Activated CD4-positive, alpha-beta T cell treated with anti-CD3 and anti-CD28 coated beads for 36 hours (primary cell): ENCODE measurements at regions of chr9 and their contacts with region 1.

Region 1: GRCh38 chr9:130866474-130866965 is 30.1 kb downstream of the QRFP start:
- DNase-seq: peak; percentile 75
- ATAC-seq: peak; percentile 81
- H3K4me3 Mint-ChIP-seq: no peak overlapping the region
- H3K27ac Mint-ChIP-seq: no peak overlapping the region
- H3K4me1 Mint-ChIP-seq: peaks cover 2% of the 10 kb centered on the region
- H3K27me3 Mint-ChIP-seq: no peaks in the 10 kb centered on the region

Region 2: GRCh38 chr9:130707225-130707976 is 159.1 kb before region 1 on chr9:
- CTCF ChIA-PET with region 1: interaction called, 60 read pairs
- POLR2A ChIA-PET with region 1: no interaction called
- intact Hi-C with region 1: loop called (anchors 1 kb)
- DNase-seq: peak; percentile 82
- ATAC-seq: peak; percentile 33
- H3K4me3 Mint-ChIP-seq: no peak overlapping the region
- H3K27ac Mint-ChIP-seq: no peak overlapping the region
- H3K4me1 Mint-ChIP-seq: peaks cover 5% of the 10 kb centered on the region
- H3K27me3 Mint-ChIP-seq: no peaks in the 10 kb centered on the region

Region 3: DNA sequence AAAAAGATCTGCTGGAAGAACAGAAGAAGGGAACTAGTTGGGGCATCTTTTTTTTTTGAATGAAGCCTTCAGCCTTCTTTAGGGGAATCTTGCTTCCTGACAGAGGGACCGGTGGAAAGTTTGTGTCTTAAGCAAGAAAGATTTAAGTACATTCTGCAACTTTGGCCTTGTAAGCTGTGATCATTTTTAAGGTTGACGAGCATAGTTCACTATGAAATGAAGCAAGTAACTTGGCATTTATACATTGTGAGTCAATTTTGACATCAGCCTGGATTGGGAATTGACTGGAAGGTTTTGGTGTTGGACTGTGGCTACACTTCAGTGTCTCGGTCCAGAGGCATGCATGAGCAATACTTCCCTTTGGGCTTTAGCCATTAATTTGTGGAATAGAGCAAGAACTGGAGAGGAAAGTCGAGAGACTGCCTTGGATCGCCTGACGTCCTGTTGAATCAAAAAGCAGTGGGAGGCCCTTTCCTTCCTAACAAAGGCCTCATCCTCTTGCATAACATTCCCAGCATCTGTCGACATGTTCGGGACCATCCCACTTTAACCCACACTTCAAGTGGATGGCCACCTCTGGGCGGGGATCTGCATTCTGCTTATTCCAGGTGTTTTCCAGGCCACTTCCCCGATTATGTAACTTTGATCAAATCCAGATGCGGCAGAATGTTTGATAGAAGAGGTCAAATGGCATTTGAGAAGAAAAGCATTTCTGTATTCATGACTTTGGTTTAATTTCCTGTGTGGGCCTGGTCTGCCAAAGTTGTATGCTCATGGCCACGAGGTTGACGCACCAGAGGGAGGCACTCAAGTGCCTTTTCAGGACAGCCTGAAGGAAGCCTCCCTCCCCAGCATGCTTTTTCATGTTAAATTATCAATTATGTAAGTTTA is 18.9 kb before region 1 on chr9:
- CTCF ChIA-PET with region 1: interaction called, 10 read pairs
- POLR2A ChIA-PET with region 1: no interaction called
- intact Hi-C with region 1: no loop called
- DNase-seq: no peak
- ATAC-seq: no peak
- H3K4me3 Mint-ChIP-seq: no peak overlapping the region
- H3K27ac Mint-ChIP-seq: no peak overlapping the region
- H3K4me1 Mint-ChIP-seq: peaks cover 11% of the 10 kb centered on the region
- H3K27me3 Mint-ChIP-seq: no peaks in the 10 kb centered on the region

Region 4: GRCh38 chr9:130940693-130941576 is 74.4 kb after region 1 on chr9:
- CTCF ChIA-PET with region 1: interaction called, 5 read pairs
- POLR2A ChIA-PET with region 1: no interaction called
- intact Hi-C with region 1: loop called (anchors 1 to 2 kb)
- DNase-seq: peak; percentile 88
- ATAC-seq: peak; percentile 86
- H3K4me3 Mint-ChIP-seq: no peak overlapping the region
- H3K27ac Mint-ChIP-seq: no peak overlapping the region
- H3K4me1 Mint-ChIP-seq: peaks cover 9% of the 10 kb centered on the region
- H3K27me3 Mint-ChIP-seq: peaks cover 38% of the 10 kb centered on the region

Region 5: DNA sequence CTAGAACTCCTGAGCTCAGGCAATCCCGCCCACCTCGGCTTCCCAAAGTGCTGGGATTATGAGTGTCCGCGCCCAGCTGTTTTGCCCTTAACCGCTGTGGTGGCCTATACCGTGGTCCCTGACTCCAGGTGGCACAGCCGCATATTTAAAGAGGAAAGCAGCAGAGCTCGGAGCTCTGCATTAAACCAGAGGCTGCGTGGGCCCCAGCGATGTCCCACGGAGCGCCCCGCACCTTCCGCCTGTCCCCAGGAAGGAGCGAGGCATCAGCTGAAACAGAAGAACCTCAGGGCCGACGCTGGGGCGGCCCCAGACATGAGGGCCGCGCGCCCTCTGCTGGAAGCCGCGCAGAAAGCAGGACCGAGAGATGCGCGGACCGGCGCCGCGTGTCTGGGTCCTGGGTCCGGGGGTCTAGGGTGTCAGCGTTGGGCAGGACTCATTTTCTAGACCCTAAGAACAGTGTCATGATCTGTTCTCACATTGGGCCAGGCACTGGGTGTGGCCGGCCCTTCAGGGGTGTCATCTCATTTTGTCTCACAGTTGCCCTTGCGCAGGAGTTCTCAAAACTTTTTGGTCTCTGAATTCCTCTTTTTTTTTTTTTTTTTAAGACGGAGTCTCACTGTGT is 180.2 kb after region 1 on chr9:
- CTCF ChIA-PET with region 1: interaction called, 34 read pairs
- POLR2A ChIA-PET with region 1: no interaction called
- intact Hi-C with region 1: loop called (anchors 1 kb)
- DNase-seq: peak; percentile 86
- ATAC-seq: peak; percentile 89
- H3K4me3 Mint-ChIP-seq: no peak overlapping the region
- H3K27ac Mint-ChIP-seq: no peak overlapping the region
- H3K4me1 Mint-ChIP-seq: peaks cover 10% of the 10 kb centered on the region
- H3K27me3 Mint-ChIP-seq: peaks cover 3% of the 10 kb centered on the region

Region 6: GRCh38 chr9:131366761-131367401 is 500.4 kb after region 1 on chr9:
- CTCF ChIA-PET with region 1: no interaction called
- POLR2A ChIA-PET with region 1: no interaction called
- intact Hi-C with region 1: no loop called
- DNase-seq: no peak
- ATAC-seq: no peak
- H3K4me3 Mint-ChIP-seq: no peak overlapping the region
- H3K27ac Mint-ChIP-seq: no peak overlapping the region
- H3K4me1 Mint-ChIP-seq: peaks cover under 1% of the 10 kb centered on the region
- H3K27me3 Mint-ChIP-seq: no peaks in the 10 kb centered on the region